ENCODE measurements at regions of chr1 and their contacts with region 1.

Region 1: DNA sequence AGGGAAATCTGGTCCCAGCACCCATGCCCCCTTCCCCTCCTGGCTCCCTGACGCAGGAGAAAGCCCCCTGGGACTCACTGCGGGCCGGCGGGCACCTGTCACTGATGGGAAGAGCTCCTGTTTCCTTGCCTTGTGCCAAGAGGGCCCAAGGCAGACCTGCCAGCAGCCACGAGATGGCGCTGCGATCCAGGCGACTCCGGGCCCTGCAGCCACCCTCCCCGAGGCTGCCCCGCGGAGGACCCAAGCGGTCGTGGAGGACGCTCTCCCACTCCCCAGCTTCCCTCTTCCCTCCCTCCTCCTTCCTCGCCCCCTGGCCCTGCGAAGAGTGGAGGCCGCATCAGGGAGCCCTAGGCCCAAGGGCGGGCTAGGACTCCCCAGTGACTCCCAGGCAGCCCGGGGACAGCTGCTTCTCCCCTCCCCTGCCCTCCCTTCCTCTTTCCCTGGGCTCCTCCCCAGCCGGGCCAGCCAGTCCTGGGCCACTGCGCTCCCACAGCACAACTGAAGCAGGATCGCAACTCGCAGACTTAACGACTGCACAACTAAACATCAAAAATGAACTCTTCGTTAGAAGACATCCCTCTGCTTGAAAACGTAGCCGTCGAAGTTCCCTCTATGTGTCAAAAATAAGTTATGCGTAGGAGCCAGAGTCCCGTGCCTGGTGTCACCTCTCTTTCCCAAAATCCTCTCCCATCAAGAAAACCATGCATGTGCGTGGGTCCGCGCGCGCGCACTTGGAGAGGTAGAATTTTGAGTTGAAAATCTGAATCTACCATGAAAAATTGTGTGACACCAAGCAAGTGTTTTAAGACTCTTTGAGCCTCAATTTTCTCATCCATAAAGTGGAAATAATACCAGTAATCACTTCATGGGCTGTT is 34.2 kb downstream of the BATF3 start:
- DNase-seq: peak; percentile 59 to 87 (median 78)
- ATAC-seq: peak; percentile 93
- H3K4me3 ChIP-seq: peak overlapping the region; percentile 17 to 38
- H3K4me3 Mint-ChIP-seq: peak overlapping the region; percentile 72
- H3K27ac ChIP-seq: no peak overlapping the region
- H3K27ac Mint-ChIP-seq: no peak overlapping the region
- H3K4me1 ChIP-seq: peaks cover 4% of the 10 kb centered on the region
- H3K4me1 Mint-ChIP-seq: peaks cover 8% of the 10 kb centered on the region
- H3K27me3 ChIP-seq: no peaks in the 10 kb centered on the region
- H3K27me3 Mint-ChIP-seq: peaks cover 2% of the 10 kb centered on the region
- CTCF ChIP-seq: peak; percentile 80

Region 2: GRCh38 chr1:212118167-212118871 is 547.2 kb before region 1 on chr1:
- CTCF ChIA-PET with region 1: no interaction called
- POLR2A ChIA-PET with region 1: no interaction called
- intact Hi-C with region 1: no loop called
- DNase-seq: no peak
- ATAC-seq: no peak
- H3K4me3 ChIP-seq: no peak overlapping the region
- H3K4me3 Mint-ChIP-seq: no peak overlapping the region
- H3K27ac ChIP-seq: no peak overlapping the region
- H3K27ac Mint-ChIP-seq: no peak overlapping the region
- H3K4me1 ChIP-seq: no peaks in the 10 kb centered on the region
- H3K4me1 Mint-ChIP-seq: peaks cover 3% of the 10 kb centered on the region
- H3K27me3 ChIP-seq: no peaks in the 10 kb centered on the region
- H3K27me3 Mint-ChIP-seq: no peaks in the 10 kb centered on the region
- CTCF ChIP-seq: no peak

Region 3: DNA sequence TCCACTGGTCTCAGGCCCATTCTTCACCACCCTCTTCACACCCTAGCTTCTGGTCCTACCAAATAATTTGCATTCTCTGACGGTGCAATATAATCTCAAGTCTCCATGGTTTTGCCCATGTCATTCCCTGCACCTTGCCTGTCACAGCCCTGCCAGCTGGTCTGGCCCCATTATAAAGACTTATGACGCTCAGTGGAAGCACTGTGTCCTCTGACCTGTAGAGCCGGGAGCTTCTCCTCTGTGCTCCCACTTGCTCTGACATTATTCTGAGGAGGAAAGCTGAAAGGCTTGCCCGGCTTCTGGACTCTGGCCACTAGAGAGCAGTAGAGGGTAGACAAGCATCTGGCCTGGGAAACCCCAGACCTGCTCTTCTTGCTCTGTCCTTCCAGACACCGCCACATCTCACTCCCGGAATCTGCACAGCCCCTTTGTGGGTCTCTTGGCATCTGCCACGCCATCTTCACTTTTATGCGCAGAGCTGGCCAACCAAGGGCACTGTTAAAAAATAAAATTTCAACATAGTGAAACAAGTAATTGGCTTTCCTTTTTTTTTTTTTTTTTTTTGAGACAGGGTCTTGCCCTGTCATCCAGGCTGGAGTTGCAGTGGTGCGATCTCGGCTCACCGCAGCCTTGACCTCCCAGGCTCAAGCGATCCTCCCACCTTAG is 188.3 kb before region 1 on chr1:
- CTCF ChIA-PET with region 1: interaction called, 8 read pairs
- POLR2A ChIA-PET with region 1: no interaction called
- intact Hi-C with region 1: loop called in 1 of 2 experiments (anchors 1 kb)
- DNase-seq: peak; percentile 50 to 87 (median 75)
- ATAC-seq: peak; percentile 96
- H3K4me3 ChIP-seq: no peak overlapping the region
- H3K4me3 Mint-ChIP-seq: peak overlapping the region; percentile 18
- H3K27ac ChIP-seq: no peak overlapping the region
- H3K27ac Mint-ChIP-seq: no peak overlapping the region
- H3K4me1 ChIP-seq: no peaks in the 10 kb centered on the region
- H3K4me1 Mint-ChIP-seq: peaks cover 12% of the 10 kb centered on the region
- H3K27me3 ChIP-seq: no peaks in the 10 kb centered on the region
- H3K27me3 Mint-ChIP-seq: peaks cover 4% of the 10 kb centered on the region
- CTCF ChIP-seq: peak; percentile 90

Region 4: GRCh38 chr1:212558693-212559480 is 106.6 kb before region 1 on chr1:
- CTCF ChIA-PET with region 1: no interaction called
- POLR2A ChIA-PET with region 1: no interaction called
- intact Hi-C with region 1: no loop called
- DNase-seq: peak; percentile 83 to 97 (median 92)
- ATAC-seq: peak; percentile 96
- H3K4me3 ChIP-seq: peak overlapping the region; percentile 45 to 82
- H3K4me3 Mint-ChIP-seq: peak overlapping the region; percentile 85
- H3K27ac ChIP-seq: peak overlapping the region; percentile 76 to 95
- H3K27ac Mint-ChIP-seq: peak overlapping the region; percentile 94
- H3K4me1 ChIP-seq: peaks cover 5% of the 10 kb centered on the region
- H3K4me1 Mint-ChIP-seq: peaks cover 10% of the 10 kb centered on the region
- H3K27me3 ChIP-seq: peaks cover 0 to 3% of the 10 kb centered on the region in 2 experiments
- H3K27me3 Mint-ChIP-seq: no peaks in the 10 kb centered on the region
- CTCF ChIP-seq: no peak

Region 5: GRCh38 chr1:212586206-212587015 is 79.1 kb before region 1 on chr1:
- CTCF ChIA-PET with region 1: no interaction called
- POLR2A ChIA-PET with region 1: no interaction called
- intact Hi-C with region 1: no loop called
- DNase-seq: no peak
- ATAC-seq: no peak
- H3K4me3 ChIP-seq: no peak overlapping the region
- H3K4me3 Mint-ChIP-seq: no peak overlapping the region
- H3K27ac ChIP-seq: no peak overlapping the region
- H3K27ac Mint-ChIP-seq: no peak overlapping the region
- H3K4me1 ChIP-seq: no peaks in the 10 kb centered on the region
- H3K4me1 Mint-ChIP-seq: no peaks in the 10 kb centered on the region
- H3K27me3 ChIP-seq: peaks cover 0 to 6% of the 10 kb centered on the region in 2 experiments
- H3K27me3 Mint-ChIP-seq: peaks cover 23% of the 10 kb centered on the region
- CTCF ChIP-seq: no peak

Region 6: GRCh38 chr1:212688341-212689047 is 23.0 kb after region 1 on chr1:
- CTCF ChIA-PET with region 1: interaction called, 11 read pairs
- POLR2A ChIA-PET with region 1: no interaction called
- intact Hi-C with region 1: no loop called
- DNase-seq: no peak
- ATAC-seq: no peak
- H3K4me3 ChIP-seq: no peak overlapping the region
- H3K4me3 Mint-ChIP-seq: no peak overlapping the region
- H3K27ac ChIP-seq: no peak overlapping the region
- H3K27ac Mint-ChIP-seq: no peak overlapping the region
- H3K4me1 ChIP-seq: peaks cover 7% of the 10 kb centered on the region
- H3K4me1 Mint-ChIP-seq: peaks cover 7% of the 10 kb centered on the region
- H3K27me3 ChIP-seq: peaks cover 4 to 6% of the 10 kb centered on the region in 2 experiments
- H3K27me3 Mint-ChIP-seq: no peaks in the 10 kb centered on the region
- CTCF ChIP-seq: no peak

Region 7: GRCh38 chr1:212749821-212750535 is 84.5 kb after region 1 on chr1:
- CTCF ChIA-PET with region 1: interaction called, 17 read pairs
- POLR2A ChIA-PET with region 1: interaction called, 3 read pairs
- intact Hi-C with region 1: no loop called
- DNase-seq: peak in 2 of 9 experiments; percentile 48 to 61
- ATAC-seq: peak; percentile 42
- H3K4me3 ChIP-seq: no peak overlapping the region
- H3K4me3 Mint-ChIP-seq: no peak overlapping the region
- H3K27ac ChIP-seq: peak overlapping the region in 1 of 2 experiments; percentile 32
- H3K27ac Mint-ChIP-seq: peak overlapping the region; percentile 58
- H3K4me1 ChIP-seq: peaks cover 42% of the 10 kb centered on the region
- H3K4me1 Mint-ChIP-seq: peaks cover 49% of the 10 kb centered on the region
- H3K27me3 ChIP-seq: no peaks in the 10 kb centered on the region
- H3K27me3 Mint-ChIP-seq: no peaks in the 10 kb centered on the region
- CTCF ChIP-seq: peak; percentile 75

Region 8: GRCh38 chr1:212777151-212777550 is 111.7 kb after region 1 on chr1:
- CTCF ChIA-PET with region 1: interaction called, 95 read pairs
- POLR2A ChIA-PET with region 1: no interaction called
- intact Hi-C with region 1: loop called (anchors 1 kb)
- DNase-seq: no peak
- ATAC-seq: no peak
- H3K4me3 ChIP-seq: no peak overlapping the region
- H3K4me3 Mint-ChIP-seq: no peak overlapping the region
- H3K27ac ChIP-seq: no peak overlapping the region
- H3K27ac Mint-ChIP-seq: no peak overlapping the region
- H3K4me1 ChIP-seq: no peaks in the 10 kb centered on the region
- H3K4me1 Mint-ChIP-seq: peaks cover 24% of the 10 kb centered on the region
- H3K27me3 ChIP-seq: no peaks in the 10 kb centered on the region
- H3K27me3 Mint-ChIP-seq: no peaks in the 10 kb centered on the region
- CTCF ChIP-seq: no peak

Region 9: DNA sequence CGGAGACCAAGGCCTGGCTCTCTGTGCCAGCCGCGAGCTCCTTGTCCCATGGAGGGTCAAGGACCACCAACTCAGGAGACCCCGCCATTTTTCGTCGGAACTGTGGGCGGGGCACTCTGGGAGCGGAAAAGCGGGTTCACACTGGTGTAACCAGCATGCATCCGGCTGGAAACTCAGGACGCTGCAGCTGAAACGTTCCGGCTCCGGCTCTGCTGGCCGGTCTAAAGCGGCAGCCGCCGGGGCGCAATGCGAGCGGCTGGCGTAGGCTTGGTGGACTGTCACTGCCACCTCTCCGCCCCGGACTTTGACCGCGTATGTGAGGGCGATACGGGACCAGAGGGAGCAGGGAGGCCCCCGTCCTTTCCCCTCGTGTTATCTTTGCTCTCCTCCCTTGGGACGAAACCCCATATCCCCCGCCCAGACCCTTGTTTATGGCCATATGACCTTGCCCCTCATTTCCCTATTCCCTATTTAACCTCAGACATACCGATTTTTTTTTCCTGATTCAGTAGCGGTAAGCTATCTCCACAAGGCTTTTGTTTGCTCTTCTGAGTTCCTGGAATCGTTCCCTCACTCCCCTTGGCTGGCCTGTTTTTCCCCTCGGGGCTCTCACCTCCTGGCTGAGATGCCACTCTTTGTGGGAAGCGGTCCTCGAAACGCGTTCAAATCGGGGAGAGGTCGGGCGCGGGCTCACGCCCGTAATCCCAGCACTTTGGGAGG is 126.4 kb after region 1 on chr1 and contains the starts of genes NSL1 and TATDN3:
- CTCF ChIA-PET with region 1: interaction called, 11 read pairs
- POLR2A ChIA-PET with region 1: no interaction called
- intact Hi-C with region 1: no loop called
- DNase-seq: peak; percentile 87 to 98 (median 95)
- ATAC-seq: peak; percentile 93
- H3K4me3 ChIP-seq: peak within 1 kb of the TSS; percentile 93 to 96
- H3K4me3 Mint-ChIP-seq: peak within 1 kb of the TSS; percentile 97
- H3K27ac ChIP-seq: peak within 1 kb of the TSS; percentile 79 to 87
- H3K27ac Mint-ChIP-seq: peak within 1 kb of the TSS; percentile 96
- H3K4me1 ChIP-seq: peaks cover 22% of the 10 kb centered on the region
- H3K4me1 Mint-ChIP-seq: peaks cover 37% of the 10 kb centered on the region
- H3K27me3 ChIP-seq: no peaks in the 10 kb centered on the region
- H3K27me3 Mint-ChIP-seq: no peaks in the 10 kb centered on the region
- CTCF ChIP-seq: no peak
- total RNA-seq, gene NSL1: 13.0 to 19.0 TPM
- total RNA-seq, gene TATDN3: 10.7 to 11.6 TPM

Region 10: GRCh38 chr1:212814537-212815334 is 149.3 kb after region 1 on chr1:
- CTCF ChIA-PET with region 1: no interaction called
- POLR2A ChIA-PET with region 1: no interaction called
- intact Hi-C with region 1: no loop called
- DNase-seq: peak in 2 of 9 experiments; percentile 8 to 29
- ATAC-seq: no peak
- H3K4me3 ChIP-seq: no peak overlapping the region
- H3K4me3 Mint-ChIP-seq: no peak overlapping the region
- H3K27ac ChIP-seq: no peak overlapping the region
- H3K27ac Mint-ChIP-seq: no peak overlapping the region
- H3K4me1 ChIP-seq: no peaks in the 10 kb centered on the region
- H3K4me1 Mint-ChIP-seq: no peaks in the 10 kb centered on the region
- H3K27me3 ChIP-seq: no peaks in the 10 kb centered on the region
- H3K27me3 Mint-ChIP-seq: no peaks in the 10 kb centered on the region
- CTCF ChIP-seq: no peak

Measured in CD8-positive, alpha-beta T cell (primary cell).